Activated CD4-positive, alpha-beta T cell treated with anti-CD3 and anti-CD28 coated beads, Interleukin-2, amount 10 ng/mL, durations not matched to agents 24 days and 14 days (primary cell): ENCODE measurements at regions of chr3 and their contacts with region 1.

Region 1: GRCh38 chr3:183210839-183211341 is 42.2 kb upstream of the B3GNT5 start:
- DNase-seq: no peak
- H3K4me3 Mint-ChIP-seq: peak overlapping the region; percentile 4
- H3K27ac Mint-ChIP-seq: peak overlapping the region; percentile 50
- H3K4me1 Mint-ChIP-seq: peaks cover 20% of the 10 kb centered on the region
- H3K27me3 Mint-ChIP-seq: peaks cover 2% of the 10 kb centered on the region

Region 2: DNA sequence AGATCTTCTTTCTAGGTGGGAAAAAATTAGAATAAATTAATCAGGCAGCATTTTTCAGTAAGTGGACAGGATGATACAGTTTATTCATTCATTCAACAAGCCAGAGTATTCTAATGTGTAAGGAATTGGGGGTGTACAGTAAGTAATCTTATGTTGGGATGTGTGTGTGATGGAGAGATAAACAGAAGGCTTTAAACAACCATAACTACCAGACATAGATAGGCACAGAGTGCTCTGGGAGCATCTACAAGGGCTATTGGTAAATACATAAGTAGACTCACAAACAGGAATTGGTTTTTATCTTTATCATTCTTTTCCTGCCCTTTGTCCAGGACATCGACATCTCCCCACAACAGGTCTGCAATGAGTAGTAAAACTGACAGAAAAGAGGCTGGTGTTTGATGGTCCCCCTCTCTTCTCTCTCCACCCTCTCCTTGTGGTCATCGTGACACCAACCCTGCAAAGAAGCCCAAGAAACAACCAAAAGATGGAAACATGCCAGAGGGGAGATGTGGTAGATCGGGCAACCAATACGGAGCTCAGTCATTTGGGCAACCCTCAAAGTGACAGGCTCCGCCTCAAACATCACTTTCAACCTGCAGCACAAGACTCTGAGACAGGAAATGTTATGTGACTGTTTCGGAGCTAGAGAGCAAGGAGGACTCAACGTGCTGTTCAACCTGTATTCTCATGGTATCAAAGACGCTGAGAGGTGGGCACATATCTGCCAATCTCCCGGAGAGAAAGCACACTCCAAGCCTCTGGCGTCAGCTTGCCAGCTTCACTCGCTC is 13.5 kb after region 1 on chr3:
- intact Hi-C with region 1: loop called (anchors 1 kb)
- DNase-seq: peak; percentile 85
- H3K4me3 Mint-ChIP-seq: peak overlapping the region; percentile 74
- H3K27ac Mint-ChIP-seq: peak overlapping the region; percentile 73
- H3K4me1 Mint-ChIP-seq: peaks cover 32% of the 10 kb centered on the region
- H3K27me3 Mint-ChIP-seq: no peaks in the 10 kb centered on the region